ENCODE measurements at regions of chr3 and their contacts with region 1.

Region 1: DNA sequence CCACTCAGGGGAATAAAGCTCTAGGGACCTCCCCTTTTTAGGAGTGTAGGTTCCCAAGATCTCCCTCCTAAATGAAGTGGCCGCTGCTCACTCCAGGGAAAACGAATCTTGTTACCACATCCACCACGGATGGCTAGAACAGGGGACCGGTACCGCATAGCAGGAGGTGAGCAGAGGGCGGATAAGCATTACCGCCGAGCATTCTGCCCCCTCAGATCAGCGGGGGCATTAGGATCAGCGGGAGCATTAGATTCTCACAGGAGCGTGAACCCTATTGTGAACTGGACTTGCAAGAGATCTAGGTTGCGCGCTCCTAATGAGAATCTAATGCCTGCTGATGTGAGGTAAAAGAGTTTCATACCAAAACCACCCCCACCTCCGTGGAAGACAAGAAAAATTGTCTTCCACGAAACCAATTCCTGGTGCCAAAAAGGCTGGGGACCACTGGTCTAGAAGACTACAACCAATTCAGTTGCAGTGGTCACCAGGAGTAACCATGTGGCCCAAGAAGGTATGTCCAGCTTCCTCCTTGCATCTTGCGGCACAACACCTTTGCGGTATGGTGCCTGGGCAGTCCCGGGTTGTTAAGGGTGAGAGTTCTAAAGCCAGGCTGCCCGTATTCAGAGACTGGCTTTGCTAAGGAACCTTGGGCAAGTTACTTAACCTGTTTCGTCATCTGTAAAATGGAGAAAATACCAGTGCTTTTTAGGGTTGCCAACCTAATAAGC is 1.1 kb upstream of the SS18L2 start:
- DNase-seq: no peak
- ATAC-seq: no peak
- H3K4me3 ChIP-seq: peak overlapping the region; percentile 82
- H3K27ac ChIP-seq: peak overlapping the region; percentile 81
- H3K4me1 ChIP-seq: no peaks in the 10 kb centered on the region
- H3K27me3 ChIP-seq: no peaks in the 10 kb centered on the region
- CTCF ChIP-seq: no peak

Region 2: DNA sequence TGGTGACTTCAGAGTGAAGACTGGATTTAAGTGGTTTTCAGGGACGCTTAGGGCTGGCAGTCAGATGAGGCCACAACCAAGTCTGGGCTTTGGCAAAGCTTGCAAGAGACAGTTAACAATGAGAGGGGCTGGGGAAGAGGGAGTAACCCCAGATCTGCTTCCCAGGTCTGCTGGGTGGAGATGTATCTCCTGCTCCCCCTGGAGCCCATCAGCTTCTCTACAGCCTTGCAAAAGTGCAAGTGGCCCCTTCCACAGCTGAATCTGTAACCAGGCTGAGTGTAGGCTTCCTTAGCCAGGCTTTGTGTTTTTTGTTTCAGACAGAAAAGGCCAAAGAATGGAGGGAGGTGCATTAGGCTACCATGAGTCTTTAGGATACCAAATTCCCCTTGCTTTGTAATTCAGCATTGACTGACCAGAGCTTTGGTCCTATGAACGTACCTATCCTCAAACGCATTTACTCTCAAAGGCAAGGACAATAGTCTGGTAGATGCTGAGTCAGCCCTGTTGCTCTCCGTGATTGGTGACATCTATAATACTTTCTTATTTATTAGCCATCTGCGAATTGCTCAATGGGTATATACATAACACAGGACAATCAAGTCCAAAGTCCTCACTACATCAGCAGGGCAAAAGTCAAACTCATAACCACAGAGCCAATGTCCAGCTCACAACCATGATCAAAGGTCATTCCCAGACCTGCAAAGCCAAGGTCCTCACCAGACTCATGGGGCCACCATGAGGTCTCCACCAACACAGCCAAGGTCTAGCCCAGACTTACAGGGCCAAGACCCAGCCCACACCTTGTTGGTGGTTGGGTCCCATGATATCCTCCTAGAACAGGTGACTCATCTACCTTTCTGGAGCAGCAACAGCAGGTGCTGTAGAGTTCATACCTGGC is 166.4 kb after region 1 on chr3:
- intact Hi-C with region 1: loop called in 1 of 2 experiments (anchors 5 kb)
- DNase-seq: no peak
- ATAC-seq: peak; percentile 48 to 72 (median 57)
- H3K4me3 ChIP-seq: no peak overlapping the region
- H3K27ac ChIP-seq: no peak overlapping the region
- H3K4me1 ChIP-seq: no peaks in the 10 kb centered on the region
- H3K27me3 ChIP-seq: no peaks in the 10 kb centered on the region
- CTCF ChIP-seq: peak; percentile 40

Measured in psoas muscle (tissue), 8 donors.